ENCODE measurements at regions of chr2 and their contacts with region 1.

Region 1: DNA sequence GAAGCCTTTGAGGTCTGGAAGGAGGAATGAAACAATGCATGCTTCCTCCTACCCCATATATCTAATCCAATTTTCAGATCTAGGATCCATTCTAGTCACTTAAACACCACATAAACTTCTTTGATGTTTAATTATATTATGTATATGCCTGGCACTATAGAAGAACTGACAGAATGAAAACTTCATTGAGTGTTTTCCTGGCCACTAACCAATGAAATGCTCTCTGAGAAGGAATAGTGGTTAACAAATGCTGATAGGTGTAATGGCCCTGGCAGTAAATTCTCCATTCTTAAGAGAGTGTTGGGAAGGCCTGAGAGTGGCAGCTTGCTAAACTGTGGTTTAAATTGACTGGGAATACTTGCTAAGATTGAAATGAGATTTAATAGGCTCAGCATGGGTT is 710.0 kb downstream of the LRRTM4 start:
- DNase-seq: no peak
- ATAC-seq: no peak

Region 2: GRCh38 chr2:76640905-76641304 is 171.3 kb before region 1 on chr2:
- intact Hi-C with region 1: no loop called
- DNase-seq: peak; percentile 46
- ATAC-seq: peak; percentile 99

Region 3: GRCh38 chr2:76759634-76760366 is 52.4 kb before region 1 on chr2:
- intact Hi-C with region 1: loop called (anchors 10 kb)
- DNase-seq: no peak
- ATAC-seq: no peak

Region 4: DNA sequence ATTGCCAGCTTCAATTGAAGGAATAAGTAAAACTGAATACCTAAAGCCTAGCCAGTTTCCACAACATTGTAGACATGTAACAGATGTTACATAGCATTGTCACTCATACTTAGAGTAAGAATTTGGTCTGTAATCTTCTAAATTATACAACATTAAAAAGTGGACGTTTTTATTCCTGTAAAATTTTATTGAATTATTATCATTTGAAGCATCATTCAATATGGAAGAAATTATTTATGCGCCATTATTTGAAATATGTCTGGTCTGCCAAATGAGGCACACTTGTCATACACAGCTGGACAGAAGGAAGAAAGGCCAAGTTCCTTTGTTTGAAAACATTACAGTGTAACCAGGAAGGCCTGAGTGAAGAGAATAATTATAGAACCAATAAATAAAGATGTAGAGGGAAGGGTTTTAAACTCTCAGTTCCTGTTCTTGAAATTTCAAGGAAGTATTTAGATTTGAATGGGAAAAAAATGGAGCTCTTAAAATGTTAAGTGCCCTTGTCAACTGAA is 134.5 kb after region 1 on chr2:
- intact Hi-C with region 1: no loop called
- DNase-seq: no peak
- ATAC-seq: no peak